Natural killer cell (primary cell): ENCODE measurements at regions of chr1 and their contacts with region 1.

Region 1: GRCh38 chr1:92994105-92994712 is 32.9 kb upstream of the DIPK1A start:
- DNase-seq: peak; percentile 25 to 92
- ATAC-seq: peak; percentile 86 to 98 (median 96)
- H3K4me3 ChIP-seq: no peak overlapping the region
- H3K4me3 Mint-ChIP-seq: no peak overlapping the region
- H3K27ac ChIP-seq: no peak overlapping the region
- H3K27ac Mint-ChIP-seq: no peak overlapping the region
- H3K4me1 ChIP-seq: peaks cover 27% of the 10 kb centered on the region
- H3K4me1 Mint-ChIP-seq: peaks cover 21 to 26% of the 10 kb centered on the region in 2 donors
- H3K27me3 ChIP-seq: no peaks in the 10 kb centered on the region
- H3K27me3 Mint-ChIP-seq: peaks cover 0 to 4% of the 10 kb centered on the region in 2 donors
- CTCF ChIP-seq: peak; percentile 85

Region 2: GRCh38 chr1:92858564-92859399 is 135.4 kb before region 1 on chr1:
- intact Hi-C with region 1: loop called (anchors 1 kb)
- DNase-seq: peak in 1 of 2 donors; percentile 88
- ATAC-seq: peak; percentile 97 to 99 (median 98)
- H3K4me3 ChIP-seq: no peak overlapping the region
- H3K4me3 Mint-ChIP-seq: peak overlapping the region; percentile 51
- H3K27ac ChIP-seq: no peak overlapping the region
- H3K27ac Mint-ChIP-seq: peak overlapping the region; percentile 22 to 81
- H3K4me1 ChIP-seq: no peaks in the 10 kb centered on the region
- H3K4me1 Mint-ChIP-seq: peaks cover 15 to 20% of the 10 kb centered on the region in 2 donors
- H3K27me3 ChIP-seq: no peaks in the 10 kb centered on the region
- H3K27me3 Mint-ChIP-seq: no peaks in the 10 kb centered on the region
- CTCF ChIP-seq: peak; percentile 97

Region 3: GRCh38 chr1:92934395-92935378 is 59.5 kb before region 1 on chr1:
- intact Hi-C with region 1: no loop called
- DNase-seq: no peak
- ATAC-seq: no peak
- H3K4me3 ChIP-seq: no peak overlapping the region
- H3K4me3 Mint-ChIP-seq: no peak overlapping the region
- H3K27ac ChIP-seq: no peak overlapping the region
- H3K27ac Mint-ChIP-seq: no peak overlapping the region
- H3K4me1 ChIP-seq: peaks cover 3% of the 10 kb centered on the region
- H3K4me1 Mint-ChIP-seq: peaks cover 42 to 49% of the 10 kb centered on the region in 2 donors
- H3K27me3 ChIP-seq: no peaks in the 10 kb centered on the region
- H3K27me3 Mint-ChIP-seq: no peaks in the 10 kb centered on the region
- CTCF ChIP-seq: no peak

Region 4: GRCh38 chr1:92951141-92951582 is 43.0 kb before region 1 on chr1:
- intact Hi-C with region 1: loop called (anchors 5 kb)
- DNase-seq: peak in 1 of 2 donors; percentile 67
- ATAC-seq: peak in 2 of 3 donors; percentile 24 to 29
- H3K4me3 ChIP-seq: no peak overlapping the region
- H3K4me3 Mint-ChIP-seq: no peak overlapping the region
- H3K27ac ChIP-seq: peak overlapping the region; percentile 29
- H3K27ac Mint-ChIP-seq: no peak overlapping the region
- H3K4me1 ChIP-seq: peaks cover 24% of the 10 kb centered on the region
- H3K4me1 Mint-ChIP-seq: peaks cover 33 to 35% of the 10 kb centered on the region in 2 donors
- H3K27me3 ChIP-seq: no peaks in the 10 kb centered on the region
- H3K27me3 Mint-ChIP-seq: no peaks in the 10 kb centered on the region
- CTCF ChIP-seq: no peak

Region 5: GRCh38 chr1:92968138-92969032 is 25.8 kb before region 1 on chr1:
- intact Hi-C with region 1: loop called (anchors 1 kb)
- DNase-seq: peak in 1 of 2 donors; percentile 75
- ATAC-seq: peak; percentile 58 to 79 (median 74)
- H3K4me3 ChIP-seq: no peak overlapping the region
- H3K4me3 Mint-ChIP-seq: no peak overlapping the region
- H3K27ac ChIP-seq: no peak overlapping the region
- H3K27ac Mint-ChIP-seq: no peak overlapping the region
- H3K4me1 ChIP-seq: peaks cover 14% of the 10 kb centered on the region
- H3K4me1 Mint-ChIP-seq: peaks cover 8 to 10% of the 10 kb centered on the region in 2 donors
- H3K27me3 ChIP-seq: no peaks in the 10 kb centered on the region
- H3K27me3 Mint-ChIP-seq: no peaks in the 10 kb centered on the region
- CTCF ChIP-seq: peak; percentile 60